Activated T-helper 1 cell treated with anti-CD3 and anti-CD28 coated beads, Interleukin-12 subunit alpha, Interleukin-12 subunit beta, Interleukin-2, Interleukin-4 antibody, amounts not matched to agents 30 ng/mL and 10 ng/mL and 1 ng/mL, durations not matched to agents 14 hours and 24 hours and 36 hours (primary cell): ENCODE measurements at regions of chr20 and their contacts with region 1.

Region 1: DNA sequence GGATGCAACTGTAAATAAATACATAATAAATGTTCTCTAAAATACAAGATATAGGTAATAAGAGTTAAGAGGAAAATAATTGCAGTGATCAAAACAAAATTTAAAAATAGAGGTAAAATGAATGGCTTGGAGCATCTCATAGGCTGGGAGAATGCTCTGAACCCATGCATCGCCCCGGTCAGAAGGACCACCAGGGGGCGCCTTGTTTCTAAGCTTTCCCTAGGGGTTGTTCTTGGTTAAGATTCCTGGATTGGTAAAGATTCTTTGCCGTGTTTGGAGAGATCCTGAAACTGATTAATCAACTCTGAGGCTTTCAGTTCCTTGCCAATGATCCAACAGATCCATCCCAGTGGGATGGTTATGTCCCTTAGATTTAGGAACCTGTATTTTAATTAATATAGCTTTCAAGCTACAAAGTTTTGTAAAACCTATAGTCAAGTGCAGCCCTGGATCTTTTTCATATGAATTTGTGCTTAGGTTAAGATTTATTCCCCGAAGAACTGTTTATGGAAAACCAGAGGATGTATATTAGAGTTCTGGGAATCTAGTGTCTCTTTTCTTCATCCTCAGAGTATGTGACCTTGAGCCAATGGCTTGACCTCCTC is 45.3 kb upstream of the PRELID3B start:
- DNase-seq: peak; percentile 71
- H3K4me3 Mint-ChIP-seq: no peak overlapping the region
- H3K27ac Mint-ChIP-seq: no peak overlapping the region
- H3K4me1 Mint-ChIP-seq: peaks cover 6% of the 10 kb centered on the region
- H3K27me3 Mint-ChIP-seq: peaks cover 14% of the 10 kb centered on the region

Region 2: DNA sequence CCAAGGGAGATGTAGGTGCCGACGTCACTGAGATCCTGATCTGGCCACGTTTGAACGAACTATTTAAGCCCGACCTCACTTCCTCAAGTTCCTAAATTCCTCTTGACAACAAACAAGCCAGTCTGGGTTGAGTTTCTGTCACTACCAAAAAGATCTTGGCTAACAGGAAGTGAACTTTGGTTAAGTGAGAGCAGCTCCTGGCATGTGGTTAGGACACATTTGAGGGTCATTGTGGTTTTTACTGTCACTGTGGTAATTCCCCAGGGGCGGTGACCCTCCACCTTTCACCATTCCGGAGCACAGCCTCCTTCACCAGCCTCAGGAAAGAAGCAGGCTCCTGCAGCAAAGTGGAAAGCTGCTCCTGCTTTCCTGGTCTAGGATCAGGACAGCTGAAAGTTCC is 32.6 kb after region 1 on chr20:
- intact Hi-C with region 1: loop called (anchors 5 kb)
- DNase-seq: peak; percentile 8
- H3K4me3 Mint-ChIP-seq: peak overlapping the region; percentile 24
- H3K27ac Mint-ChIP-seq: peak overlapping the region; percentile 53
- H3K4me1 Mint-ChIP-seq: peaks cover 61% of the 10 kb centered on the region
- H3K27me3 Mint-ChIP-seq: peaks cover 2% of the 10 kb centered on the region

Region 3: DNA sequence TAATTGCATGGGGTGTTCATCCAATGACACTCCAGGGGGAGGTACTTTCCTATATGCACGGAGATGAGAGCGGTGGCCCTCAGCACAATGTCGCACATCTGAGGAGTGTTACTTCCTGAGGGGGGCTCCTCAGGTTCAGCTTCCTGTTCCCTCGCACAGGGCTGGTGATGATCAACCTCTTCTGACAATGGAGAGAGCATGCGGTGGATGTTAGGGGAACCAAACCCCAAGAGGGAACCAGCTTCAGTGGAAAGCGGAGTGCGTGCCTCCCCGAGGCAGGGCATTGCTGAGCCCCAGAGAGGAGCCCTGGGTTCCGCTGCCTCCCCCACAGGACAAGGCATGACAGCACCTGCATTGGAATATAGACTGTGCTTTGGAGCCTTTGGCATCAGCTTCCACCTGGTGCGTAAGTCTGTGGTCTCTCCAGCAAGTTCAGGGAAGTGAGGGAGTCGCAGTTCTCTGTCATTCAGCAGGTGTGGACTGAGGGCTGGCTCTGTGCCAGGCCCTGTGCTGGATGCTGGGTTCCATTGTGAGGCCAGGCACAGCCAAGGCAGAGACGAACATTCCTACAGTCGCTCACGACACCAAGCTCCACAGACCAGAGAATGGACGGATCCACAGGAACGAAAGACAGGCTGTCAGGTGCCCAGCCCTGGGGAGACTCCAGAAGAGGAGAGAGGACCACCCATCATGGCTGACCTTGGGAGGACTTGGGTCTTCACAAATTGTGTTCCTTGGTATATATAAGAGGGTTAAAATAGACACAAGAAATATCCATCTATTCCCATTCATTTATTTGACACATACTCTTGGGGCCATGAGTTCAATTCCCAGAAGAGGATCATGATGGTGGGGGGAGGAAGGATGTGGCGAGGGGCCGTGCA is 71.8 kb after region 1 on chr20:
- intact Hi-C with region 1: loop called (anchors 1 kb)
- DNase-seq: peak; percentile 52
- H3K4me3 Mint-ChIP-seq: peak overlapping the region; percentile 78
- H3K27ac Mint-ChIP-seq: peak overlapping the region; percentile 92
- H3K4me1 Mint-ChIP-seq: peaks cover 80% of the 10 kb centered on the region
- H3K27me3 Mint-ChIP-seq: no peaks in the 10 kb centered on the region

Region 4: DNA sequence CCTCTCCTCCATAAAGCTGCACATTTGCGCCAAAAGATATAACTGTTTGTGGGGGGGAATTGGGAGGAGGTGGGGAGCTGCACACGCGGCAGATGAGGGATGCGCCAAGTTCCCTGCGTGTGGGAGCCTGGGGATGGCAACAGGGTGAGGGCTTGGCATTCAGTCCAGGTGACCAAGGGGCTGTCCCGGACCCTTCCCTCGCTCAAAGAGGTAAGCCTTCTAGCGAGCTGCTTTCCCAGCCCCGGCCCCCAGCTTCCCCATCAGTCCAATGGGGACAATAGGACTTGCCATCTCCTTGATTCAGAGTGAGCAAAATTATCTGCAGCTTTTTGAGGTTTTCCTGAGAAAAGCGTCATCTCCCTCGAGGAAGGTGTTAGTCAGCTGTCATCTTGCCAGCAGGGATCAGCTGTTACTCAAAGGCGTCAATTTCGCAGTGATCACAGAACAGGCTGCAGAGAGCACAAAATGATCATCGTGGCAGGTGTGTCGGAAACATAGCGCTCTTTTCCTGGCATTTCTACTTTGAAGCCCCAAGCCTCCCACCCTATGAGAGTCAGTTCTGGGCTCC is 97.0 kb after region 1 on chr20:
- intact Hi-C with region 1: no loop called
- DNase-seq: no peak
- H3K4me3 Mint-ChIP-seq: no peak overlapping the region
- H3K27ac Mint-ChIP-seq: no peak overlapping the region
- H3K4me1 Mint-ChIP-seq: peaks cover 36% of the 10 kb centered on the region
- H3K27me3 Mint-ChIP-seq: no peaks in the 10 kb centered on the region

Region 5: DNA sequence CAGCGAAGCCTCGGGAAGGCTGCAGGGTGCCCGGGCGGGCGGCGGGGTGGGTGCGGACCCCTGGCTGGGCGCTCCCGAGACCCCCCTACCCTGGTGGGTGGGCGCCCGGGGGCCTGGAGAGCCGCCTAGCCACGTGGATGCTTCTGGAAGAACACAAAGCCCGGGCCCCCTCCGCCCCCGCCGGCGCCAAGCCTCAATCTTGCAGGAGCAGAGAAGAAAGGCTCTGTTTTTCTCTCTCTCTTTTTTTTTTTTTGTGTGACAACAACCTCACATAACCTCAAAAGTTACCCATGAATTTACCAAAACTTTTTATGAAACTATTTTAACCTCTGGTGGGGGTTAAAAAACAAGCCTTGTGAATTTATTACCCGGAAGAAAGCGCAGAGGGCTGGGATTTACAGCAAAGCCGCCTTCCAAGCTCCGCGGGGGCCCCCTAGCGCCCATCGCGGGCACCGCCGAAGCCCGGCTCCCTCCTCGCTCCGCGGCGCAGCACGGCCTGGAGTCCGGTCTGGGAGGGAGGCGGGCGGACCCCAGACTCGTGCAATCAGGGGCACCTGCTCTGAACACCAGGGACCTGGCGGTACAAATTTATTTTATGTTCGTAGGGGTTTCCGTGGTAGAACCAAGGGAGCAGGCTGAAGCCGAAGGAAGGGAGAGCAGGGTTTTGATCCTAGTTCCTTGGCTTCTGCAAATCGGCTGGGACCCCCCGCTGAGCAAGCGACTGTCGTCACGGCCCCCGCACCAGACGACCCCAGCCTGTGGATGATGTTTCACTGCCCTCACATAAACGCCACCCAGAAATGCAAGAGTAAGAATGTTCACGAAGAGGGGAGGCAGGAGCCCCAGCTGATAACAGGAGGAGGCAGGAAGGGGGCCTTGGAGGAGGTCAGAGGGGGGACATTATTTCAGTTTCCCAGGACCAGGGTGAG is 134.6 kb after region 1 on chr20:
- intact Hi-C with region 1: loop called (anchors 1 kb)
- DNase-seq: peak; percentile 72
- H3K4me3 Mint-ChIP-seq: peak overlapping the region; percentile 82
- H3K27ac Mint-ChIP-seq: peak overlapping the region; percentile 72
- H3K4me1 Mint-ChIP-seq: peaks cover 7% of the 10 kb centered on the region
- H3K27me3 Mint-ChIP-seq: peaks cover 2% of the 10 kb centered on the region

Region 6: DNA sequence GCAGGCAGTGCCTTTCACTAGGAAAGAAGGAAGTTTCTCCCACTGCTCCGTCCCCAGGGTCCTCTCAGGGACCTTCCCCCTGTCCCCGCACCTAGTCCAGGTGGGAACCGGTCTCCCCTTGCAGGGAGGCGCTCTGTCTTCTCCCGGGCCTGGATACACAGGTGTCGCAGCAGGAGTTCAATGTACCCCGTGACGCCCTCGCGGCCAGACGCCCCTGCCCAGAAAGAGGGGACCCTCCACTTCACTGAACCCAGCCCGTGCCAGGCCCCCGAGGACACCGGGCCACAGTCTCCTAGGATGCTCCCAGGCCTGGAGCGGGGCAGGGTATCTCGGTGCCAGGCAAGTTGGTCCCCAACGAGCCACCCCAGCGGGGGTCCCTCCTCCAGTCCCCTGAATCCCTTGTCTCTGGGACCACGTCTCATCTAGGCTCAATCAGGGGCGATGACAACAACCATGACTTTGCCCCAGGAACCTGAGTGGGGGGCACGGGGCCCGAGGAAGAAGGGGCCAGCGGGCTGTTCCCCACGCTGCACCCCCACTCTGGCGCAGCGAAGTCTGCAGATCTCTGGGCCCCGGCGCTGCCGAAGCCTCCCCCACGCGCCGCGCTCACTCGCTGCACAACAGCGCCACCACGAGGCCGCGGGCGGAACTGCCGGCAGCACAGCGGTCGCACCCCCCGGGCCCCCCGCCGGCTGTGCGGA is 315.5 kb after region 1 on chr20:
- intact Hi-C with region 1: loop called (anchors 1 kb)
- DNase-seq: peak; percentile 54
- H3K4me3 Mint-ChIP-seq: peak overlapping the region; percentile 45
- H3K27ac Mint-ChIP-seq: no peak overlapping the region
- H3K4me1 Mint-ChIP-seq: no peaks in the 10 kb centered on the region
- H3K27me3 Mint-ChIP-seq: peaks cover 5% of the 10 kb centered on the region